ENCODE measurements at regions of chr12 and their contacts with region 1.

Region 1: DNA sequence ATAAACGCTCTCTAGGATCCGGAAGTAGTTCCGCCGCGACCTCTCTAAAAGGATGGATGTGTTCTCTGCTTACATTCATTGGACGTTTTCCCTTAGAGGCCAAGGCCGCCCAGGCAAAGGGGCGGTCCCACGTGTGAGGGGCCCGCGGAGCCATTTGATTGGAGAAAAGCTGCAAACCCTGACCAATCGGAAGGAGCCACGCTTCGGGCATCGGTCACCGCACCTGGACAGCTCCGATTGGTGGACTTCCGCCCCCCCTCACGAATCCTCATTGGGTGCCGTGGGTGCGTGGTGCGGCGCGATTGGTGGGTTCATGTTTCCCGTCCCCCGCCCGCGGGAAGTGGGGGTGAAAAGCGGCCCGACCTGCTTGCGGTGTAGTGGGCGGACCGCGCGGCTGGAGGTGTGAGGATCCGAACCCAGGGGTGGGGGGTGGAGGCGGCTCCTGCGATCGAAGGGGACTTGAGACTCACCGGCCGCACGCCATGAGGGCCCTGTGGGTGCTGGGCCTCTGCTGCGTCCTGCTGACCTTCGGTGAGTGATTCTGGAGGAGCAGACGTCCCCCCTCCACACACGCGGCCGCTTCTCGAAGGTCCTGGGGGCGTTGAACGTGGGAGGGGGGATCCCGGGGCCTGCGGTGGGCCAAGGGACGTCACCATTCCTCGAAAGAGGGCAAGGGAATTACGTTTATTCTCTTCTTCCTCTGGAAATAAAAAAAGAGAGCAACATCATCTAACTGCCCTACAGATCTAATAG is at the start of gene HSP90B1:
- DNase-seq: peak; percentile 99 to 100 (median 100)
- H3K4me3 ChIP-seq: peak within 1 kb of the TSS; percentile 87
- H3K4me3 Mint-ChIP-seq: peak within 1 kb of the TSS; percentile 87 to 96 (median 91)
- H3K27ac ChIP-seq: peak within 1 kb of the TSS; percentile 99
- H3K27ac Mint-ChIP-seq: peak within 1 kb of the TSS; percentile 99 to 100 (median 100)
- H3K4me1 ChIP-seq: peaks cover 61% of the 10 kb centered on the region
- H3K4me1 Mint-ChIP-seq: peaks cover 42 to 83% (median 54%) of the 10 kb centered on the region in 4 donors
- H3K27me3 ChIP-seq: no peaks in the 10 kb centered on the region
- H3K27me3 Mint-ChIP-seq: peaks cover 0 to 3% of the 10 kb centered on the region in 2 donors
- total RNA-seq, gene HSP90B1: 515 to 534 TPM

Region 2: DNA sequence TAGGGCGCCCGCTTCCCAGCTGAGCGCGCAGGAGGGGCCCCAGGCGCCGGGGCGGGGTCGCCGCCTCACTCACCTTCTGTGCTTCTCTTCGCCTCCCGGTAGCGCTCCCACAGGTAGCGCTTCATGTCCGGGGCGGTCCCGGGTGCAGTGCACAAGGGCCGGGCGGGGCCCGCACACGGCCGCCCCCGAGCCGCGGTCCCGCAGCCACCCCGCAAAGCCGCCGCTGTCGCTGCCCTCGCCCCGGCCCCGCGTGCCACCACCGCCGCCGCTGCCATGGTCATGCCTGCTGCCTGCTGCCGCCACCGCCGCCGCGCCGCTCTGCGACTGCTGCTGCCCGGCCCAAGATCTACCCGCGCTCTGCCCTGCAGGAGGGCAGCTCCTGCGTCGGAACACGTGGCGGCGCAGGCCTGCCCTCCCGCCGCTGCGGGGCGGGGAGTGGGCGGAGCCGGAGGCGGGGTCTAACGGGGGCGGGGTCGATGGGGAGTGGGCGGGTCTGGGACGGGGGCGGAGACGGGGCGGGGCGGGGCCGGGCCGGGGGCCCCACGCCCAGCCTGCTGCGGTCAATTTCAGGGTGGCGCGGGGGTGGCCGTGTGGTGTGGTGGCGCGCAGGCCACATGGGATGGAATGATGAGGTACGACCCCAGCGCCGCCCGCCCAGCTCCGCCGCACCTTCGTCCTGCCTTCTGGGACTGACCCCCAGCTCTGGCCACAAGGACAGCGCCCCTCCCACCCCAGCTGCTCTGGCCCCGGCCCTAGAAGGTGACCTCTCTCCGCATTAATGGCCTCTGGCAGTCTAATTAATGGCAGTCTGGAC is 89.1 kb before region 1 on chr12 and contains the start of gene NT5DC3:
- CTCF ChIA-PET with region 1: no interaction called
- POLR2A ChIA-PET with region 1: interaction called, 28 read pairs
- intact Hi-C with region 1: loop called (anchors 1 kb)
- DNase-seq: peak; percentile 80 to 90 (median 86)
- H3K4me3 ChIP-seq: peak within 1 kb of the TSS; percentile 44 to 63
- H3K4me3 Mint-ChIP-seq: peak within 1 kb of the TSS; percentile 87 to 97 (median 89)
- H3K27ac ChIP-seq: peak within 1 kb of the TSS; percentile 35
- H3K27ac Mint-ChIP-seq: peak within 1 kb of the TSS; percentile 69 to 90 (median 86)
- H3K4me1 ChIP-seq: peaks cover 14% of the 10 kb centered on the region
- H3K4me1 Mint-ChIP-seq: peaks cover 6 to 26% (median 13%) of the 10 kb centered on the region in 4 donors
- H3K27me3 ChIP-seq: no peaks in the 10 kb centered on the region
- H3K27me3 Mint-ChIP-seq: no peaks in the 10 kb centered on the region
- total RNA-seq, gene NT5DC3: 6.1 to 6.8 TPM

Region 3: DNA sequence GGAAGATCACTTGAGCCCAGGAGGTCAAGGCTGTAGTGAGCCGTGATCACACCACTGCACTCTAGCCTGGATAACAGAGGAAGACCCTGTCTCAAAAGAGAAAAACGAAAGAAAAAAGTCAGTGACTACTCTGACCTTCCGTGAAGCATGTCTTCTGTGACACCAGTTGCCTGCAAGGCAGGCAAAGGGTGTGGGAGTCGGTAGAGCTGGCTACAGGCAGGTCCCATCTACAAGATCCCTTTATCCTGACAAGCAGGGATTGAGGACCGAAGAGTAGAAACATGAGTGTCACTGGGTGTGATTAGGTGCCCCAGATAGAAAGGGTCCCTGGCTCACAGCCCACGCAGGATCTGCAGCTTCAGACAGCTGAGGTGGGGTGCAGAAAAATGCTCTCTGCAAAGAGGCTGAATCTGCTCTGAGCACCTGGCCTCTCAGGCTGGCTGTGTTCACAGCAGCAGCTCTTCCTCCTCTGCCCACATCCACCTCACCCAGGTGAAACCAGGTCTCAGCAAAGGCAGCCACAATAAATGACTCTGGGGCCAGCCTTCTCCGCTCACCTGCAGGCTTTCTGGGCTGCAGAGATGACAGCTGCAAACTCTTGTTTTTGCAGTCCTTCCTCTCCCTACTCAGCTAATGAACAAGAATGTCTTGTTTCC is 28.6 kb before region 1 on chr12:
- CTCF ChIA-PET with region 1: interaction called, 5 read pairs
- POLR2A ChIA-PET with region 1: interaction called, 98 read pairs
- intact Hi-C with region 1: loop called (anchors 1 kb)
- DNase-seq: peak; percentile 59 to 71 (median 67)
- H3K4me3 ChIP-seq: peak overlapping the region in 1 of 2 donors; percentile 40
- H3K4me3 Mint-ChIP-seq: peak overlapping the region; percentile 64 to 85 (median 74)
- H3K27ac ChIP-seq: peak overlapping the region; percentile 41
- H3K27ac Mint-ChIP-seq: peak overlapping the region; percentile 82 to 92 (median 85)
- H3K4me1 ChIP-seq: peaks cover 47% of the 10 kb centered on the region
- H3K4me1 Mint-ChIP-seq: peaks cover 42 to 62% (median 50%) of the 10 kb centered on the region in 4 donors
- H3K27me3 ChIP-seq: no peaks in the 10 kb centered on the region
- H3K27me3 Mint-ChIP-seq: no peaks in the 10 kb centered on the region

Region 4: DNA sequence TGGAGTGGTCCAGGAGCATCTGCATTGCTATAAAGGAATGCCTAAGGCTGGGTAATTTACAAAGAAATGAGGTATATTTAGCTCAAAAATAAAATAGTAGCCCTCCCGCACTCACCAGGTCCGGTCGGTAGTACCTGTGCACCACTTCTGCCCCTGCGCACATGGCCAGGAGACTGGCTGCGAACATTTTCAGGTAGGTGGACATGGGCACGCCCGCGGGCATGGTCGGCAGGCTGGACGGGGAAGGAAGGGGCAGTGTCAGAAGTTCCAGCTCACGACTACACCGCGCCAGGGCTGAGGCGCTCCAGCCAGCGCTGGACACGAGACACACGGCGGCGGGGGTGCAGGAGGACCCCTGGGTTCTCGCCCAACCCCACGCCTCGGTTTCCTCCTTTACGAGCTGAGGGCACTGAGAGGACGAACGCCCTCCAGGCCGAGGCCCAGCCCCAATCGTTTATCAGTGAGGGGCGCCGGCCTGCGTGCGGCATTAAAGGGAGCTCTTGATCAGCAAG is 26.4 kb after region 1 on chr12:
- CTCF ChIA-PET with region 1: interaction called, 9 read pairs
- POLR2A ChIA-PET with region 1: interaction called, 93 read pairs
- intact Hi-C with region 1: loop called (anchors 1 kb)
- DNase-seq: peak in 2 of 5 donors; percentile 2 to 34
- H3K4me3 ChIP-seq: peak overlapping the region; percentile 61 to 96
- H3K4me3 Mint-ChIP-seq: peak overlapping the region; percentile 97 to 100 (median 98)
- H3K27ac ChIP-seq: peak overlapping the region; percentile 75
- H3K27ac Mint-ChIP-seq: peak overlapping the region; percentile 91 to 100 (median 99)
- H3K4me1 ChIP-seq: peaks cover 16% of the 10 kb centered on the region
- H3K4me1 Mint-ChIP-seq: peaks cover 20 to 48% (median 36%) of the 10 kb centered on the region in 4 donors
- H3K27me3 ChIP-seq: no peaks in the 10 kb centered on the region
- H3K27me3 Mint-ChIP-seq: no peaks in the 10 kb centered on the region

Region 5: DNA sequence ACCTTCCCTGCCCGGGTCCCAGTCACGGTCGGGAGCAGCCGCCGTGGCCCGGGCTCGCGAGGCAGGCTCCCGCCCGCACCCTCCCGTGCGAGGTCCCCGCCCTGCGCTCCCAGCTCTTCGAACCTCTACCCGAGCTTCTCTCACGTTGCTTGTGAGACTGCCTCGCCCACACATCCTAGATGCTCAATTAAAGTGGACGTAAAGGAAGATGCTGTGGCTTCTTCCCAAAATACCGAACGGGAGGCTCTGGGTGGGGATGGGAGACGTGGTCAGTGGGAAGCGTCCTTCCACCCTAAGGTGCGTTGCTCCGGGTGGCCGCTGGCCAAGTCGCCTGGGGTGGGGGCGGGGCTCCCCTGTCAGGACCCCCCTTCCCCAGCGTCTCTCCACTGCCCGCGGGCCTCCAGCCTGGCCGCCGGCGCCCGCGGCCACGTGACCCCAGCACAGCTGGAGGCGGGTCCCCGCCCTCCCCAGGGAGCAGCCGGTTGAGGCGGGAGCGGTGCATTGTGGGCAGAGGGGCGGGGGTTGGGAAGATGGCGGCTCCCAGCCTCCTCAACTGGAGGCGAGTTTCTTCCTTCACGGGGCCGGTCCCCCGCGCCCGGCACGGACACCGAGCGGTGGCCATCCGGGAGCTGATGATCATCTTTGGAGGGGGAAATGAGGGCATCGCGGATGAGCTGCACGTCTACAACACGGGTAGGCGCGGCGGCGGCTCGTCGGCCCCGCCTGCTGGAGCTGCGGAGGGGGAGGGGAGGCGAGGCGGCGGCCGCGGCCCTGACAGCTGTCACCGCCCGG is 134.0 kb after region 1 on chr12 and contains the start of gene HCFC2:
- CTCF ChIA-PET with region 1: no interaction called
- POLR2A ChIA-PET with region 1: interaction called, 29 read pairs
- intact Hi-C with region 1: loop called (anchors 1 kb)
- DNase-seq: peak; percentile 83 to 91 (median 86)
- H3K4me3 ChIP-seq: peak within 1 kb of the TSS; percentile 91 to 98
- H3K4me3 Mint-ChIP-seq: peak within 1 kb of the TSS; percentile 91 to 97 (median 94)
- H3K27ac ChIP-seq: peak within 1 kb of the TSS; percentile 77
- H3K27ac Mint-ChIP-seq: peak within 1 kb of the TSS; percentile 85 to 95 (median 92)
- H3K4me1 ChIP-seq: peaks cover 21% of the 10 kb centered on the region
- H3K4me1 Mint-ChIP-seq: peaks cover 18 to 35% (median 23%) of the 10 kb centered on the region in 4 donors
- H3K27me3 ChIP-seq: peaks cover 5% of the 10 kb centered on the region
- H3K27me3 Mint-ChIP-seq: peaks cover 4 to 5% of the 10 kb centered on the region in 2 donors
- total RNA-seq, gene HCFC2: 18.1 to 18.5 TPM

Region 6: DNA sequence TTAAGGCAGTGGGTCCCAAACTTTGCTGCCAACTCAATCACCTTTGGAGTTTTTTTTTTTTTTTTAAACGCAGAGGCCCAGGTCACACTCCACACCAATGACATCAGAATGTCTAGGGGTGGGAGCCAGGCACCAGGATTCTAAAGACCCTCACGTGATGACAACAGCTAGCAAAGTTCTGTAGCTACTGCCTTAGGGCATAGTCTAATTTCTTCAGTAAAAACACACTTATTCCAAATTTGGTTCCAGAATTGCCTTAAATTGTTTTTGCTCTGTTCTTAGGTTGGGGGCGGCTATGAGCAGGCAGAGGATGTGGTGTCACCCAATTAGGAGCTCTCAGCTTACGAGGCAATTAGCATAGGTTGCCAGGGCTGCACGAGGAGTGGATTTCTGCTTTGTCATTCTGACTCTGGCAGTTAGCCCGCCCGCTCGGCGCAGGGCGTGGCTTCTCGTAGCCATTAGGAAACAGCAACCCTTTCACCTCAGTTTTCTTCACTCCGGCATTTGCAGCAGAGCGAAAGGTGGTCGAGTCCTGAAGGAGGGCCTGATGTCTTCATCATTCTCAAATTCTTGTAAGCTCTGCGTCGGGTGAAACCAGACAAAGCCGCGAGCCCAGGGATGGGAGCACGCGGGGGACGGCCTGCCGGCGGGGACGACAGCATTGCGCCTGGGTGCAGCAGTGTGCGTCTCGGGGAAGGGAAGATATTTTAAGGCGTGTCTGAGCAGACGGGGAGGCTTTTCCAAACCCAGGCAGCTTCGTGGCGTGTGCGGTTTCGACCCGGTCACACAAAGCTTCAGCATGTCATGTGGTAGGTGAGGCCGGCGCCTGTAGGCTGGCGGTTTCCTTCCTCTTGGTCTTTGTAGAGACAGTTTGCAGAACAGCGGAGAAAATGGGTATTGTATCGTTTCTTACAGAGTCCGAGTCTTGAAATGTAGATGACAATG is 356.6 kb after region 1 on chr12:
- CTCF ChIA-PET with region 1: no interaction called
- POLR2A ChIA-PET with region 1: interaction called, 19 read pairs
- intact Hi-C with region 1: loop called (anchors 10 kb)
- DNase-seq: peak; percentile 87 to 94 (median 88)
- H3K4me3 ChIP-seq: peak overlapping the region; percentile 80 to 96
- H3K4me3 Mint-ChIP-seq: peak overlapping the region; percentile 94 to 100 (median 99)
- H3K27ac ChIP-seq: peak overlapping the region; percentile 82
- H3K27ac Mint-ChIP-seq: peak overlapping the region; percentile 94 to 99 (median 96)
- H3K4me1 ChIP-seq: peaks cover 35% of the 10 kb centered on the region
- H3K4me1 Mint-ChIP-seq: peaks cover 23 to 41% (median 30%) of the 10 kb centered on the region in 4 donors
- H3K27me3 ChIP-seq: no peaks in the 10 kb centered on the region
- H3K27me3 Mint-ChIP-seq: peaks cover 0 to 2% of the 10 kb centered on the region in 2 donors